CD4-positive, alpha-beta T cell (primary cell): ENCODE measurements at regions of chr3 and their contacts with region 1.

Region 1: DNA sequence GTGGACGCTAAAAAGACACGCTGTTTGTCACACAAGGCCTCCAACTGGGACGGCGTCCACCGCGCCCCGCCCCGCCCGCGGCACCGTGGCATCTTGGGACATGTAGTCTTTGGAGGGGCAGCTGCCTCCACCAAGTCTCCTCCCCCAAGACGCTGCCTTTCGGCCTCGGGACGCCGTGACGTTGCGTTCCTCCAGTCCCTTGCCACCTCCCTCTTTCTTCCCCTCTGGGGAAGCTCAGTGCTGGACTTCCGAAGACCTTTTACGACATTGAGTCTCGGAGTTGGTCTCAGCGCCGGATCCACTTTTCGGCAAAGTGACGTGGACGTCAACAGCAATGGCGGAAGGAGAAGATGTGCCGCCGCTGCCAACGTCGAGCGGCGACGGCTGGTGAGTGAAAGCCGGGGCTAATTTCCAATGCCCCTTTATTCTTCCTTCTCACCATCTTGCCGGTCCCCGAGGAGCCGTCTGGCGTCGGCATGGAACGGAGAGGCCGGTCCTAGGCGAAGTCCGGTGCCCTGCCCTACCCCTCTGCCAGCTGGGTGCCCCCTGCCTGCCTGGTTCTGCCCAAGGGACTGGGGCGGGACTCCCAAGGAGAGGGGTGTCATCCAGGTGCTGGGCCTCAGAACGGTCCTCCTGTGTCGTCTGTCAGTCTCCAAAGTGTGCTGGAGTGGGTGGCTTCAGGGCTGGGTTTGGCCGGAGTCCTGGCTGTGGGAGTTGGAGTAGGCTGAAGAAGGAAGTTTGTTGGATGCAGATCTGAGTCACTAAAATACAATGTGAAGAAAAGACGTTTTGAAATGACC is at the start of gene TBC1D23:
- DNase-seq: peak; percentile 93 to 99 (median 96)
- ATAC-seq: peak; percentile 99
- H3K4me3 ChIP-seq: peak within 1 kb of the TSS; percentile 96
- H3K4me3 Mint-ChIP-seq: peak within 1 kb of the TSS; percentile 96
- H3K27ac ChIP-seq: peak within 1 kb of the TSS; percentile 78 to 97
- H3K27ac Mint-ChIP-seq: peak within 1 kb of the TSS; percentile 94
- H3K4me1 ChIP-seq: peaks cover 26% of the 10 kb centered on the region
- H3K4me1 Mint-ChIP-seq: peaks cover 64% of the 10 kb centered on the region
- H3K27me3 ChIP-seq: no peaks in the 10 kb centered on the region
- H3K27me3 Mint-ChIP-seq: no peaks in the 10 kb centered on the region
- CTCF ChIP-seq: no peak
- total RNA-seq, gene TBC1D23: 31.8 to 34.8 TPM

Region 2: DNA sequence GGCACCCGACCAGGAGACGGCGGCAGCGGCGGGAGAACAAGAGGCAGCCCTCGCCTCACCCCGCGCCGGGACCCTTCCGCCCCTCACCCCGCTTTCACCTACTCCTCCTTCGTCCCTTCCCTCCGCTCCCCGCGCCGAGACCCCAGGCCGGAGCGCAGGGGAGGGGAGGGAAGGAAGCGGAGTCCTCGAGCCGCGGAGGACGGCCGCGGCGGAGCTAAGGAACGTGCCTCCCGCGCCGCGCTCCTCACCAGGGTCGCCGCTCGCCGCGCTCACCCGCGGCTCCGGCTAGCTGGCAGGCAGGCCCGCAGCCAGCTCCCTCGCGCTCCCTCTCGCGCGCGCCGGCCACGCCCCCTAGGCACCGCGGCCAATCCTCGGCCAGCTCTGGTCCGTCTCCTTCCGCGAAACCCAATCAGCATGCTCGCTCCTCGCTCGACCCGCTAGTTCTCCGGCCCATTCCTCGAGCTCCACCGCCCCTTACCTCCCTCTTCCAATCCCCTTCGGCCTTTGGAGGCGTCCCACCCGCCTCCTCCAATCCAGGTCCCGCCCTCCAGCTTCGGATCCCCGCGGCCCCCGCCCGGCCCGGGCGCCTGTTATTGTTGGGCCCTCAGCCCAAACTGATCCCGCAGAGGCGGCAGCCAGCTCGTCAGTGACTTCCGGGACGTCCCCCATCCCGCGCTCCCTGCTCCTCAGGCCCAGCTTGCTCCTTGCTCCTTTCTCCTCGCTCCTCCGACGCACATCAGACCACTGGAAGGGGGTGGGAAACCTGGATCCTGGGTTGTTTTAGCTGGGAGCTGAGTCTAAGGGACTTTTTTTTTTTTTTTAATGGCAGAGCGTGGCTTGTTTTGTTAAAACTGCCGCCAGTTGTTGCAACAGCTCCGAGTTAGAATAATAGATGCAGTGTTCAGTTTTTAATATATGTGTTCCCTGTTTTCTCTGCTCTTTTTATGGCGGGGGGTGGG is 1359.2 kb before region 1 on chr3 and contains the start of gene DCBLD2:
- CTCF ChIA-PET with region 1: no interaction called
- POLR2A ChIA-PET with region 1: interaction called, 6 read pairs
- intact Hi-C with region 1: loop called in 1 of 2 experiments (anchors 5 kb)
- DNase-seq: peak; percentile 79 to 96 (median 88)
- ATAC-seq: peak; percentile 98
- H3K4me3 ChIP-seq: peak within 1 kb of the TSS; percentile 67
- H3K4me3 Mint-ChIP-seq: peak within 1 kb of the TSS; percentile 93
- H3K27ac ChIP-seq: peak within 1 kb of the TSS in 1 of 2 donors; percentile 45
- H3K27ac Mint-ChIP-seq: peak within 1 kb of the TSS; percentile 76
- H3K4me1 ChIP-seq: peaks cover 13% of the 10 kb centered on the region
- H3K4me1 Mint-ChIP-seq: peaks cover 26% of the 10 kb centered on the region
- H3K27me3 ChIP-seq: peaks cover 0 to 2% of the 10 kb centered on the region in 2 experiments
- H3K27me3 Mint-ChIP-seq: peaks cover 12% of the 10 kb centered on the region
- CTCF ChIP-seq: no peak
- total RNA-seq, gene DCBLD2: 2.2 to 2.5 TPM

Region 3: GRCh38 chr3:100334488-100335351 is 73.8 kb after region 1 on chr3 and contains the start of gene NIT2:
- CTCF ChIA-PET with region 1: no interaction called
- POLR2A ChIA-PET with region 1: interaction called, 13 read pairs
- intact Hi-C with region 1: loop called in 1 of 2 experiments (anchors 5 kb)
- DNase-seq: peak; percentile 59 to 91 (median 74)
- ATAC-seq: peak; percentile 94
- H3K4me3 ChIP-seq: peak within 1 kb of the TSS; percentile 81
- H3K4me3 Mint-ChIP-seq: peak within 1 kb of the TSS; percentile 93
- H3K27ac ChIP-seq: peak within 1 kb of the TSS; percentile 29 to 70
- H3K27ac Mint-ChIP-seq: peak within 1 kb of the TSS; percentile 83
- H3K4me1 ChIP-seq: peaks cover 17% of the 10 kb centered on the region
- H3K4me1 Mint-ChIP-seq: peaks cover 30% of the 10 kb centered on the region
- H3K27me3 ChIP-seq: no peaks in the 10 kb centered on the region
- H3K27me3 Mint-ChIP-seq: no peaks in the 10 kb centered on the region
- CTCF ChIP-seq: no peak
- total RNA-seq, gene NIT2: 18.6 to 21.4 TPM

Region 4: DNA sequence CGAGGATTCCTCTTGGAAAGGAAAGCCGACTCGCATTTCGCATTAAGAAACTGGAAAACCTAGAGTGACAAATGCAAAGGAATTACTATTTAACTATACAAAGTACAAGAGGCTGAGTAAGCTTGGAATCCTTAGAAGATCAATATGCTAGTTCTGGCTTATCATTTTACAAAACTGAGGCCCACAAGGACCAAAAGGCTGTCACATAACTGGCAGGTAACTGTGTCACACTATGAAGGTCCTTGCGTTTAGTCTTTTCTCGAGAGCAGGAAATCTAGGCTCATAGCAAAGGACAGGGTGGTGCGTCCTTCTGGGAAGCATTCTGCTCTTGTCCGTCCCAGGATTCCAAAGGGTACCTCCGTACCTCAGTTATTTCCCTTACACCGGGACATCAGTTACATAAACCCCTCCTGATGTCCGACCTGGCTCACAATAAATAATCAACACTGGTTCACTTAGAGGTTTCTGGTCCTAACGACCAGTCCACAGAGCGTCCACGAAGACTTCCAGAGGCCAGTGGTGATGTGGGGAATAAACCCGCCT is 1425.1 kb after region 1 on chr3:
- CTCF ChIA-PET with region 1: no interaction called
- POLR2A ChIA-PET with region 1: no interaction called
- intact Hi-C with region 1: loop called in 1 of 2 experiments (anchors 10 kb)
- DNase-seq: peak in 4 of 14 experiments; percentile 7 to 40 (median 26)
- ATAC-seq: peak; percentile 5
- H3K4me3 ChIP-seq: peak overlapping the region; percentile 91
- H3K4me3 Mint-ChIP-seq: peak overlapping the region; percentile 99
- H3K27ac ChIP-seq: peak overlapping the region; percentile 87 to 94
- H3K27ac Mint-ChIP-seq: peak overlapping the region; percentile 99
- H3K4me1 ChIP-seq: peaks cover 30% of the 10 kb centered on the region
- H3K4me1 Mint-ChIP-seq: peaks cover 49% of the 10 kb centered on the region
- H3K27me3 ChIP-seq: no peaks in the 10 kb centered on the region
- H3K27me3 Mint-ChIP-seq: no peaks in the 10 kb centered on the region
- CTCF ChIP-seq: no peak

Region 5: DNA sequence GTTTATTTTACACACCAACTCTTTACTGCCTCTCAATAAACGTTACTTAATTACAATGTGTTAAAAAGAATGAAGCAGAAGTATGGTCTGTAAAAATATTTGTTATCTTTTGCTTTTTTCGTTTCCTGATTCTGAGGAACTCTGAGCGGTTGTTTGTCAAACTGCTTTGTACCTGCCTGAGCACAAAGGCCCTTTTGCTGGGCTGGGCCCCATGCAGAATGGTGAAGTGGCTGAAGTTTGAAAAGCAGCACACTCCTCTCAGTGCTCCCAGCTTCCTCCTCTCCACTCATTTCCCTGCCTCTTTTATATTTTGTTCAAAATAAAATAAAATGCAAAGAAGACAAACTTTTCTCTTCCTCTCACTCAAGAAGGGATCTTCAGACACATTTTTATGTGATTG is 1818.0 kb after region 1 on chr3:
- CTCF ChIA-PET with region 1: no interaction called
- POLR2A ChIA-PET with region 1: no interaction called
- intact Hi-C with region 1: no loop called
- DNase-seq: peak in 9 of 14 experiments; percentile 11 to 54 (median 36)
- ATAC-seq: peak; percentile 77
- H3K4me3 ChIP-seq: no peak overlapping the region
- H3K4me3 Mint-ChIP-seq: peak overlapping the region; percentile 70
- H3K27ac ChIP-seq: peak overlapping the region; percentile 59 to 66
- H3K27ac Mint-ChIP-seq: peak overlapping the region; percentile 96
- H3K4me1 ChIP-seq: peaks cover 22% of the 10 kb centered on the region
- H3K4me1 Mint-ChIP-seq: peaks cover 69% of the 10 kb centered on the region
- H3K27me3 ChIP-seq: no peaks in the 10 kb centered on the region
- H3K27me3 Mint-ChIP-seq: no peaks in the 10 kb centered on the region
- CTCF ChIP-seq: no peak